ENCODE measurements at regions of chr6 and their contacts with region 1.

Region 1: DNA sequence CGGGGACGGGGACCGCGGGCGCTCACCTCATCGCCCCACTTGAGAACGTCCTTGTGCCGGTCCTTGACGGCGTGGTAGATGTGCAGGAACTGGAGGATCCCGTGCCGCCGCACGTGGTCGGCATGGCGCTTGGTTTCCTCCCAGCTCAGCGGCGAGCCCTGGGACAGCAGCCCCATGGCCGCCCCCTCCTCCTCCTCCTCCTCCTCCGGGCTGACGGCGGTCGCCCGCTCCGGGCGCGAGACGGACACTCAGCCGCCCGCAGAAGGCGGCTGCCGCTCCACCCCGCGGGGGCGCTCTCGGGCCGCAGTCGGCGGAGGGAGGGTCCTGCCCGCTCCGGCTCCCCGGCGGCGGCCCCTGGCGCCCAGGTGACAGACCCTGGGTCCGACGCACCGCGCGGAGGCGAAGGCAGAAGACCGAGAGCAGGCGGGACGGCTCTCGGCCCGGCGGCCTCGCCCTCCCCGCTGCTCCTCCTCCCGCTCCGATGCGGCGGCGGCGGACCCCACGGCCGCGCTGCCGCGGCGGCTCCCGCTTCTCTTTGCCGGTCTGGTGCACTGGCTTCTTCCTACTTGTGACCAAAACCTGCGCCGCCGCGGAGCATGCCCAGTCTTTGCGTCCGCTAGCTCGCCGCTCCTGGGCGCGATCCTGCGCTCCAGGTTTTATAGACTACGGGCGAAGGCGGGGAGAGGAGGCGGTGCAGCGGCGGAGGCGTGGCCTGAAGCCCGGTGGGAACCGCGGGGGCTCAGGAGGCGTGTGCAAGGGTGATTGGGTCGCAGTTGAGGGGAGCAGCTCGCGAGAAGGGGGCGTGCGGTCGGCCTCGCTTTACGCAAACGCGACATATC is at the start of gene GCLC:
- DNase-seq: peak; percentile 82 to 85 (median 84)
- H3K4me3 ChIP-seq: peak within 1 kb of the TSS; percentile 61 to 63
- H3K4me3 Mint-ChIP-seq: peak within 1 kb of the TSS; percentile 95 to 99 (median 98)
- H3K27ac ChIP-seq: peak within 1 kb of the TSS; percentile 59
- H3K27ac Mint-ChIP-seq: peak within 1 kb of the TSS; percentile 79 to 96 (median 94)
- H3K4me1 ChIP-seq: peaks cover 51% of the 10 kb centered on the region
- H3K4me1 Mint-ChIP-seq: peaks cover 47 to 73% (median 59%) of the 10 kb centered on the region in 4 donors
- H3K27me3 ChIP-seq: no peaks in the 10 kb centered on the region
- H3K27me3 Mint-ChIP-seq: no peaks in the 10 kb centered on the region
- total RNA-seq, gene GCLC: 39.6 to 40.9 TPM

Region 2: GRCh38 chr6:53064726-53065215 is 479.9 kb before region 1 on chr6:
- CTCF ChIA-PET with region 1: no interaction called
- POLR2A ChIA-PET with region 1: no interaction called
- intact Hi-C with region 1: loop called (anchors 1 kb)
- DNase-seq: peak; percentile 93 to 99 (median 96)
- H3K4me3 ChIP-seq: peak overlapping the region; percentile 74 to 99
- H3K4me3 Mint-ChIP-seq: peak overlapping the region; percentile 98 to 100 (median 99)
- H3K27ac ChIP-seq: peak overlapping the region; percentile 63
- H3K27ac Mint-ChIP-seq: peak overlapping the region; percentile 86 to 99 (median 99)
- H3K4me1 ChIP-seq: peaks cover 52% of the 10 kb centered on the region
- H3K4me1 Mint-ChIP-seq: peaks cover 34 to 73% (median 54%) of the 10 kb centered on the region in 4 donors
- H3K27me3 ChIP-seq: no peaks in the 10 kb centered on the region
- H3K27me3 Mint-ChIP-seq: no peaks in the 10 kb centered on the region

Region 3: GRCh38 chr6:53673162-53673683 is 128.5 kb after region 1 on chr6:
- CTCF ChIA-PET with region 1: no interaction called
- POLR2A ChIA-PET with region 1: no interaction called
- intact Hi-C with region 1: no loop called
- DNase-seq: no peak
- H3K4me3 ChIP-seq: no peak overlapping the region
- H3K4me3 Mint-ChIP-seq: no peak overlapping the region
- H3K27ac ChIP-seq: no peak overlapping the region
- H3K27ac Mint-ChIP-seq: no peak overlapping the region
- H3K4me1 ChIP-seq: no peaks in the 10 kb centered on the region
- H3K4me1 Mint-ChIP-seq: no peaks in the 10 kb centered on the region
- H3K27me3 ChIP-seq: no peaks in the 10 kb centered on the region
- H3K27me3 Mint-ChIP-seq: peaks cover 8 to 14% of the 10 kb centered on the region in 2 donors

Region 4: DNA sequence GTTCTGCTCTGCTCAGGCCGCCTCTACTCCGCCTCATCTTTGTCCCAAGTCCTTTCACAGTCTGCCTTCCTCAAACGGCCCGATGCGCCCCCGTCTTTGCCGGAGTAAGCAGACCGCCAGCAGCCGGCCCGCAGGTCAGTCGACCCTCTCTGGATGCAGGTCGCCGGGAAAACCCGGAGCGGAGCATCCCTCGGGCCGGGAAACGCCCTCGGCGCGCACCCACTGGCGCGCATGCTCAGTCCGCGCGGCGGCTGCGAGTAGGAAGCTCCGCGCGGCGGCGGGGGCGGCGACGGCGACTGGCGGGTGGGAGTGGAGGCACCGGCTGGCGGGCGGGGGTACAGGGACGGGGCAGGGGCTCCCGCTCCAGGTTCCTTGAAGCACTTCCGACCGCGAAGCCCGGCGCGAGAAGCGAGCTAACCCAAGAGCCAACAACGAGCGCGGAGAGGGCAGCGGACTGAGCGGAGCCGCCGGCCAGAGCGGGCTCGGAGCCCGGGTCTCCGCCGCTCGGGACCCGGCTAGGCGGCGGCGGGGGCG is 250.1 kb after region 1 on chr6 and contains the start of gene LRRC1:
- CTCF ChIA-PET with region 1: no interaction called
- POLR2A ChIA-PET with region 1: interaction called, 15 read pairs
- intact Hi-C with region 1: loop called (anchors 1 kb)
- DNase-seq: peak; percentile 79 to 84 (median 84)
- H3K4me3 ChIP-seq: peak within 1 kb of the TSS; percentile 74 to 77
- H3K4me3 Mint-ChIP-seq: peak within 1 kb of the TSS; percentile 94 to 98 (median 97)
- H3K27ac ChIP-seq: peak within 1 kb of the TSS; percentile 41
- H3K27ac Mint-ChIP-seq: peak within 1 kb of the TSS; percentile 81 to 97 (median 91)
- H3K4me1 ChIP-seq: peaks cover 21% of the 10 kb centered on the region
- H3K4me1 Mint-ChIP-seq: peaks cover 14 to 36% (median 28%) of the 10 kb centered on the region in 4 donors
- H3K27me3 ChIP-seq: no peaks in the 10 kb centered on the region
- H3K27me3 Mint-ChIP-seq: peaks cover 2 to 6% of the 10 kb centered on the region in 2 donors
- total RNA-seq, gene LRRC1: 4.6 to 5.2 TPM

Measured in CD4-positive, alpha-beta memory T cell (primary cell).